Activated B cell treated with CpG ODN at 0.5 μM for 24 hours (primary cell): ENCODE measurements at regions of chrX and their contacts with region 1.

Region 1: GRCh38 chrX:100636321-100636991 is at the start of gene TSPAN6:
- DNase-seq: peak; percentile 46
- ATAC-seq: peak; percentile 99
- H3K4me3 Mint-ChIP-seq: peak within 1 kb of the TSS; percentile 85
- H3K27ac Mint-ChIP-seq: no peak within 1 kb of the TSS
- H3K4me1 Mint-ChIP-seq: peaks cover 8% of the 10 kb centered on the region
- H3K27me3 Mint-ChIP-seq: peaks cover 10% of the 10 kb centered on the region
- CTCF ChIP-seq: no peak
- total RNA-seq, gene TSPAN6: 0.07 and 0.12 TPM in 2 replicates

Region 2: GRCh38 chrX:100512471-100512870 is 124.0 kb before region 1 on chrX:
- CTCF ChIA-PET with region 1: interaction called, 22 read pairs
- POLR2A ChIA-PET with region 1: no interaction called
- intact Hi-C with region 1: loop called (anchors 1 kb)
- DNase-seq: no peak
- ATAC-seq: no peak
- H3K4me3 Mint-ChIP-seq: no peak overlapping the region
- H3K27ac Mint-ChIP-seq: no peak overlapping the region
- H3K4me1 Mint-ChIP-seq: no peaks in the 10 kb centered on the region
- H3K27me3 Mint-ChIP-seq: peaks cover 2% of the 10 kb centered on the region
- CTCF ChIP-seq: no peak

Region 3: DNA sequence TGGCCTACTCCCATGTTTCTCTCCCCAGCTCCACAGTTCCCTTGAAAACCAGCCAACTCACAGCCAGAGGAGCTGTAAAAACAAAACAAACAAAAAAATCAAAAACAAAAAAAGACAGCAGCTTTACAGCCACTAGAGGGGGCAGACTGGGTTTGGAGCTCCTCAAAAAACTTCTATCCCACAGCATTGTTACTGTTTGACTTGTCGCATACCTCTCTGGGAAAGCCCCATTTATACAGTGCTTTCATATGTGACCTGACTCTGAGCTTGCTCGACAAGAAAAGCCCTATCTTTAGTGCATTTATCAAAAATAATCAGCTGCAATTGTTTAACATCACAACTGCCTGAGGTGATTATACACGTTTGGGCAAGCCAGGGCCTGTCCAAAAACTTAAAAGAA is 21.5 kb before region 1 on chrX:
- CTCF ChIA-PET with region 1: interaction called, 16 read pairs
- POLR2A ChIA-PET with region 1: no interaction called
- intact Hi-C with region 1: loop called (anchors 1 kb)
- DNase-seq: no peak
- ATAC-seq: peak; percentile 90
- H3K4me3 Mint-ChIP-seq: no peak overlapping the region
- H3K27ac Mint-ChIP-seq: no peak overlapping the region
- H3K4me1 Mint-ChIP-seq: peaks cover 5% of the 10 kb centered on the region
- H3K27me3 Mint-ChIP-seq: peaks cover 9% of the 10 kb centered on the region
- CTCF ChIP-seq: no peak

Region 4: GRCh38 chrX:100625985-100626491 is 10.4 kb before region 1 on chrX:
- CTCF ChIA-PET with region 1: no interaction called
- POLR2A ChIA-PET with region 1: no interaction called
- intact Hi-C with region 1: loop called (anchors 1 kb)
- DNase-seq: no peak
- ATAC-seq: peak; percentile 73
- H3K4me3 Mint-ChIP-seq: peak overlapping the region; percentile 46
- H3K27ac Mint-ChIP-seq: peak overlapping the region; percentile 46
- H3K4me1 Mint-ChIP-seq: peaks cover 13% of the 10 kb centered on the region
- H3K27me3 Mint-ChIP-seq: no peaks in the 10 kb centered on the region
- CTCF ChIP-seq: no peak

Region 5: DNA sequence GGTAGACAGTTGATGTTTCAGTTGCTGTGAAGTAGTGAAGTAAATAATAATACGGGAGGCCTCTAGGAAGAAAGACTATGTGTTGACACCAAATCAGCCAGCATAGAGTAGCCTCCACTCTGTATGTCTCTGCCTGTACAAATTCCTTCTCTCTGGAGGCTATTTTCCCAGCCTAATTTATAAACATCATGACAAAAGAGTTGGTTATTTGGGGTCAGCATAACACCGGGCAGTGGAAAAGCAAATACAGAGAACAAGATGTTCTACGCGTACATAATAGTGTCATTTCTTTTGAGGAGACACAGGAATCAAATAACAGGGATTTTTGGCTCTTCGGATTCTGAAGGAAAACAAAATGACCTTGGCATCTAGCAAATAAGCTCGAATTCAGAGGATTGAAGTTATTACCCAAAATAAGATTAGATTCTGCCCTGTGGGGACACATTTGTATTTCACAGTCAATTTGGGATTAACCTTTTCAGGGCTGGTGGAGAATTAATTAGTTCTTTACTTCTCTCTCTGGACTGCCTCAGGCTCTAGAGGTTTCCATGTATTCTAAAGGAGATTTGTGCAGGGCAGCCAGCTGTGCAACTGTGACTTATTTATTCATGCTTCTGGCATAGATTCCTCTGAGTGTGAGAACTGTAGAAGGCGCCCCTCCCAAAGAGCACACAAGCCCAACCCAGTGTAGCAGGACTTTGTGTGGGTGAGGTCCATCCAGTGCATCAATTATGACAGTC is 109.5 kb after region 1 on chrX:
- CTCF ChIA-PET with region 1: no interaction called
- POLR2A ChIA-PET with region 1: no interaction called
- intact Hi-C with region 1: no loop called
- DNase-seq: no peak
- ATAC-seq: no peak
- H3K4me3 Mint-ChIP-seq: no peak overlapping the region
- H3K27ac Mint-ChIP-seq: no peak overlapping the region
- H3K4me1 Mint-ChIP-seq: no peaks in the 10 kb centered on the region
- H3K27me3 Mint-ChIP-seq: peaks cover 2% of the 10 kb centered on the region
- CTCF ChIP-seq: no peak